B cell (primary cell): ENCODE measurements at regions of chr2 and their contacts with region 1.

Region 1: GRCh38 chr2:118046634-118047210 is 32.9 kb upstream of the CCDC93 start:
- DNase-seq: peak; percentile 66
- ATAC-seq: no peak
- H3K4me3 ChIP-seq: no peak overlapping the region
- H3K4me3 Mint-ChIP-seq: no peak overlapping the region
- H3K27ac ChIP-seq: no peak overlapping the region
- H3K27ac Mint-ChIP-seq: no peak overlapping the region
- H3K4me1 ChIP-seq: peaks cover 0 to 5% of the 10 kb centered on the region in 2 donors
- H3K4me1 Mint-ChIP-seq: peaks cover 10% of the 10 kb centered on the region
- H3K27me3 ChIP-seq: peaks cover 0 to 9% (median 4%) of the 10 kb centered on the region in 4 experiments
- H3K27me3 Mint-ChIP-seq: peaks cover 28% of the 10 kb centered on the region
- CTCF ChIP-seq: peak; percentile 83

Region 2: GRCh38 chr2:118013724-118014491 is 32.8 kb before region 1 on chr2 and contains the start of gene CCDC93:
- CTCF ChIA-PET with region 1: interaction called, 16 read pairs
- POLR2A ChIA-PET with region 1: no interaction called
- intact Hi-C with region 1: no loop called
- DNase-seq: peak; percentile 94
- ATAC-seq: peak; percentile 86
- H3K4me3 ChIP-seq: peak within 1 kb of the TSS; percentile 82 to 99 (median 96)
- H3K4me3 Mint-ChIP-seq: peak within 1 kb of the TSS; percentile 97
- H3K27ac ChIP-seq: peak within 1 kb of the TSS; percentile 90 to 97
- H3K27ac Mint-ChIP-seq: peak within 1 kb of the TSS; percentile 92
- H3K4me1 ChIP-seq: peaks cover 21 to 24% of the 10 kb centered on the region in 2 donors
- H3K4me1 Mint-ChIP-seq: peaks cover 34% of the 10 kb centered on the region
- H3K27me3 ChIP-seq: peaks cover 0 to 9% (median 0%) of the 10 kb centered on the region in 4 experiments
- H3K27me3 Mint-ChIP-seq: peaks cover 9% of the 10 kb centered on the region
- CTCF ChIP-seq: no peak
- total RNA-seq, gene CCDC93: 79.6 and 86.7 TPM in 2 replicates

Region 3: DNA sequence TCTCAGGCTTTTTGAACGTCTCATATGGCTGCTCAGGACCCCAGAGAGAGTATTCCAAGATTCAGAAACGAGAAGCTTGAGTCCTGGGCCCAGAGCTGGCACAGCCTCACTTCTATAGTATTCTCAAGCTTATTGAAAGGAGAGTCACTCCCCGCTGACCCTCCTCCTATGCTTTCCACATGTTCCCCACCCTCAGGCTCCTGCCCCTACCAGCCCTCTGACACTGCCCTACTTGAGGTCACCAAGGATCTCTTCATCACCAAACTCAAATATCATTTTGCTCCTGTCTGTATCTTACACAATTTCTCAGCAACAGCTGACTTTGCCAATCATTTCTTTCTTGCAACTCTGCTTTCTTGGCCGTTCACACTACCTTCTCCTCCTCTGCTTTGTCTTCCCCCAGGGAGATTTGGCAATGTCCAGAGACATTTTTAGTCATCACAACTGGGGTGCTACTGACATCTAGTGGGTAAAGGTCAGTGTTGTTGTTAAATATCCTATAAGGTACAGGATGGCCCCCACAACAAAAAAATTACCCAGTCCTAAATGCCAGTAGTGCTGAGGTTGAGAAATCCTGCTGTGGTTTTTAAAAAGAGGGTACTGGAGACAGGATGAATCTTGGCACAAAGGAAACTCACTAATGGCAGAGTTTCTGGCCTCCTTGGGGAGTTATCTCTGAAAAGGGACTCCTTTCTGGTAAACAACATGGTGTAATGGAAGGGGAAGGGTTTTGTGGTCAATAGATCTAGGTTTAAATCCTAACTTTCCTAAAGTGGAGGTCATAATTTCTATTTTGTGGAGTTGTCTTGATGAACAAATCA is 14.6 kb after region 1 on chr2:
- CTCF ChIA-PET with region 1: interaction called, 784 read pairs
- POLR2A ChIA-PET with region 1: interaction called, 4 read pairs
- intact Hi-C with region 1: loop called (anchors 1 kb)
- DNase-seq: peak; percentile 72
- ATAC-seq: peak; percentile 84
- H3K4me3 ChIP-seq: no peak overlapping the region
- H3K4me3 Mint-ChIP-seq: peak overlapping the region; percentile 10
- H3K27ac ChIP-seq: no peak overlapping the region
- H3K27ac Mint-ChIP-seq: peak overlapping the region; percentile 60
- H3K4me1 ChIP-seq: peaks cover 33 to 45% of the 10 kb centered on the region in 2 donors
- H3K4me1 Mint-ChIP-seq: peaks cover 43% of the 10 kb centered on the region
- H3K27me3 ChIP-seq: peaks cover 0 to 5% (median 0%) of the 10 kb centered on the region in 4 experiments
- H3K27me3 Mint-ChIP-seq: peaks cover 13% of the 10 kb centered on the region
- CTCF ChIP-seq: peak; percentile 79

Region 4: GRCh38 chr2:118088051-118089024 is 41.6 kb after region 1 on chr2 and contains the start of gene INSIG2:
- CTCF ChIA-PET with region 1: interaction called, 11 read pairs
- POLR2A ChIA-PET with region 1: no interaction called
- intact Hi-C with region 1: loop called (anchors 1 kb)
- DNase-seq: peak; percentile 94
- ATAC-seq: peak; percentile 86
- H3K4me3 ChIP-seq: peak within 1 kb of the TSS; percentile 81 to 95 (median 82)
- H3K4me3 Mint-ChIP-seq: peak within 1 kb of the TSS; percentile 93
- H3K27ac ChIP-seq: peak within 1 kb of the TSS; percentile 60 to 71
- H3K27ac Mint-ChIP-seq: peak within 1 kb of the TSS; percentile 88
- H3K4me1 ChIP-seq: peaks cover 17 to 20% of the 10 kb centered on the region in 2 donors
- H3K4me1 Mint-ChIP-seq: peaks cover 30% of the 10 kb centered on the region
- H3K27me3 ChIP-seq: no peaks in the 10 kb centered on the region
- H3K27me3 Mint-ChIP-seq: no peaks in the 10 kb centered on the region
- CTCF ChIP-seq: peak; percentile 18
- total RNA-seq, gene INSIG2: 26.5 and 29.5 TPM in 2 replicates

Region 5: GRCh38 chr2:118221666-118222594 is 175.2 kb after region 1 on chr2:
- CTCF ChIA-PET with region 1: interaction called, 10 read pairs
- POLR2A ChIA-PET with region 1: no interaction called
- intact Hi-C with region 1: no loop called
- DNase-seq: peak; percentile 74
- ATAC-seq: peak; percentile 53
- H3K4me3 ChIP-seq: no peak overlapping the region
- H3K4me3 Mint-ChIP-seq: peak overlapping the region; percentile 4
- H3K27ac ChIP-seq: no peak overlapping the region
- H3K27ac Mint-ChIP-seq: no peak overlapping the region
- H3K4me1 ChIP-seq: peaks cover 18 to 22% of the 10 kb centered on the region in 2 donors
- H3K4me1 Mint-ChIP-seq: peaks cover 21% of the 10 kb centered on the region
- H3K27me3 ChIP-seq: peaks cover 5 to 49% (median 45%) of the 10 kb centered on the region in 4 experiments
- H3K27me3 Mint-ChIP-seq: peaks cover 64% of the 10 kb centered on the region
- CTCF ChIP-seq: peak; percentile 83